ENCODE measurements at regions of chr7 and their contacts with region 1.

Region 1: GRCh38 chr7:23273141-23273599 is 26.0 kb upstream of the MALSU1 start:
- DNase-seq: peak; percentile 95
- H3K4me3 Mint-ChIP-seq: peak overlapping the region; percentile 18
- H3K27ac Mint-ChIP-seq: no peak overlapping the region
- H3K4me1 Mint-ChIP-seq: peaks cover 6% of the 10 kb centered on the region
- H3K27me3 Mint-ChIP-seq: no peaks in the 10 kb centered on the region
- CTCF ChIP-seq: peak; percentile 84

Region 2: DNA sequence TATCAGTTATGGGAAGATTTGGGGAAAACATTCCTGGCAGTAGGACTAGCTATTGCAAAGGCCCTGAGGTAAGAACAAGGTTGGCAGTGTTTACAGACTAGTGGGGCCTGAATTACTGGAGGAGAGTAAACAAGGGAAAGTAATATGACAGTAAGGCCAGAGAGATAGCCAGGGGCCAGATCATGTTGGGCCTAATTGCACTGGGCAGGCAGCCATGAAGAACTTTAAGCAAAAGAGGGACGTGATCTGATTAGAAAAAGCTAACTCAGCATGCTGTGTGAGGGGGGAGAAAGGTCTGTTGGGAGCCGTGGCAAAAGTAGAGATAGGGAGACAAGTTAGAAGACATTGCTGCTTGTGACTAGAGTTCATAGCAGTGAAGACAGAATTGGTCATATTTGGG is 82.1 kb before region 1 on chr7:
- CTCF ChIA-PET with region 1: interaction called, 38 read pairs
- POLR2A ChIA-PET with region 1: no interaction called
- intact Hi-C with region 1: no loop called
- DNase-seq: no peak
- H3K4me3 Mint-ChIP-seq: no peak overlapping the region
- H3K27ac Mint-ChIP-seq: no peak overlapping the region
- H3K4me1 Mint-ChIP-seq: no peaks in the 10 kb centered on the region
- H3K27me3 Mint-ChIP-seq: no peaks in the 10 kb centered on the region
- CTCF ChIP-seq: no peak

Region 3: GRCh38 chr7:23298885-23299769 is 26.0 kb after region 1 on chr7 and contains the start of gene MALSU1:
- CTCF ChIA-PET with region 1: interaction called, 12 read pairs
- POLR2A ChIA-PET with region 1: interaction called, 7 read pairs
- intact Hi-C with region 1: no loop called
- DNase-seq: peak; percentile 97
- H3K4me3 Mint-ChIP-seq: peak within 1 kb of the TSS; percentile 93
- H3K27ac Mint-ChIP-seq: peak within 1 kb of the TSS; percentile 71
- H3K4me1 Mint-ChIP-seq: peaks cover 23% of the 10 kb centered on the region
- H3K27me3 Mint-ChIP-seq: no peaks in the 10 kb centered on the region
- CTCF ChIP-seq: no peak
- total RNA-seq, gene MALSU1: 64.8 and 78.3 TPM in 2 replicates

Region 4: GRCh38 chr7:23431702-23432199 is 158.6 kb after region 1 on chr7:
- CTCF ChIA-PET with region 1: interaction called, 5 read pairs
- POLR2A ChIA-PET with region 1: interaction called, 3 read pairs
- intact Hi-C with region 1: loop called (anchors 1 kb)
- DNase-seq: no peak
- H3K4me3 Mint-ChIP-seq: no peak overlapping the region
- H3K27ac Mint-ChIP-seq: peak overlapping the region; percentile 12
- H3K4me1 Mint-ChIP-seq: peaks cover 21% of the 10 kb centered on the region
- H3K27me3 Mint-ChIP-seq: no peaks in the 10 kb centered on the region
- CTCF ChIP-seq: no peak

Region 5: DNA sequence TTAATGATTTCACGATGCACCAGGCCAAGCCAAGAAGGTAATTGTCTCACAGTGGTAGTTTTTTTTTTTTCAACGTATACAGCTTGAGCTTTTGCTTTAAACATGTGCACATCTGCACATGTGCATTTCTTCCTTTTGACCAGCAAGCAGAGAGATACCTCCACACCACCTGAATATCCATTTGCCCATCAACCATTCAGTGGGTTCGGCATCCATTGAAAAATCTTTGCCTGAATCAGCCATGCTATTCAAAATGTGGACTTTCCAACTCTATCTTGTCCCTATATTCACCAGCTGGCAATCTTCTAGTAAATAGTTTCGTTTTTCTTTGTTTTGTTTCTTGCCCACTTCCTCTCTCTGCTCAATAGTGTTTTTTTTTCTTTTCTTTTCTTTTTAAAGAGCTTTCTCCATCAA is 266.3 kb after region 1 on chr7:
- CTCF ChIA-PET with region 1: interaction called, 81 read pairs
- POLR2A ChIA-PET with region 1: interaction called, 7 read pairs
- intact Hi-C with region 1: loop called (anchors 5 kb)
- DNase-seq: no peak
- H3K4me3 Mint-ChIP-seq: no peak overlapping the region
- H3K27ac Mint-ChIP-seq: no peak overlapping the region
- H3K4me1 Mint-ChIP-seq: peaks cover 2% of the 10 kb centered on the region
- H3K27me3 Mint-ChIP-seq: no peaks in the 10 kb centered on the region
- CTCF ChIP-seq: no peak